Psoas muscle (tissue), 8 donors: ENCODE measurements at regions of chr19 and their contacts with region 1.

Region 1: DNA sequence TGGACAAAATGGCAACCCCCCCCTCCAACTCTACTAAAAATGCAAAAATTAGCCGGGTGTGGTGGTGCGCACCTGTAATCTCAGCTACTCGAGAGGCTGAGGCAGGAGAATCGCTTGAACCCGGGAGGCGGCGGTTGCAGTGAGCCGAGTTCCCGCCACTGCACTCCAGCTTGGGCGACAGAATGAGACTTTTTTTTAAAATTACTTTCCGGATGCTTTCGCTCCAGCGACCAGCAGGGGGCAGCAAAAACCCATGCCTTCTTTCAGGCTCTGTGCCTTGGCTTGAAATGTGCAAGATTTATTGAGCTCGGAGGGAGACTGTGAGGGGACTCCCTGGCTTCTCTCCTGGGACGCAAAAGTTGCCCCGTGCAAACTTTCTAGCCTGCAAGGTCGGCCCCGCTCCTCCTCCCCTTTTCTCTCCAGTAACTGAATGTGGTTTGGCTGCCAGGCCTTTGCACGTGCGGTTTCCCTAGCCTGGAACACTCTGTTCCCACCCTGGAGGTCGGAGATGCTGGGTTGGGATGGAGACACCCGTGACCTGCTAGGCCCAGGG is 61.4 kb upstream of the NFIC start:
- DNase-seq: peak; percentile 61 to 87
- ATAC-seq: peak; percentile 54 to 85 (median 64)
- H3K4me3 ChIP-seq: no peak overlapping the region
- H3K27ac ChIP-seq: no peak overlapping the region
- H3K4me1 ChIP-seq: no peaks in the 10 kb centered on the region
- H3K27me3 ChIP-seq: peaks cover 3 to 59% (median 6%) of the 10 kb centered on the region in 3 donors
- CTCF ChIP-seq: peak; percentile 87

Region 2: DNA sequence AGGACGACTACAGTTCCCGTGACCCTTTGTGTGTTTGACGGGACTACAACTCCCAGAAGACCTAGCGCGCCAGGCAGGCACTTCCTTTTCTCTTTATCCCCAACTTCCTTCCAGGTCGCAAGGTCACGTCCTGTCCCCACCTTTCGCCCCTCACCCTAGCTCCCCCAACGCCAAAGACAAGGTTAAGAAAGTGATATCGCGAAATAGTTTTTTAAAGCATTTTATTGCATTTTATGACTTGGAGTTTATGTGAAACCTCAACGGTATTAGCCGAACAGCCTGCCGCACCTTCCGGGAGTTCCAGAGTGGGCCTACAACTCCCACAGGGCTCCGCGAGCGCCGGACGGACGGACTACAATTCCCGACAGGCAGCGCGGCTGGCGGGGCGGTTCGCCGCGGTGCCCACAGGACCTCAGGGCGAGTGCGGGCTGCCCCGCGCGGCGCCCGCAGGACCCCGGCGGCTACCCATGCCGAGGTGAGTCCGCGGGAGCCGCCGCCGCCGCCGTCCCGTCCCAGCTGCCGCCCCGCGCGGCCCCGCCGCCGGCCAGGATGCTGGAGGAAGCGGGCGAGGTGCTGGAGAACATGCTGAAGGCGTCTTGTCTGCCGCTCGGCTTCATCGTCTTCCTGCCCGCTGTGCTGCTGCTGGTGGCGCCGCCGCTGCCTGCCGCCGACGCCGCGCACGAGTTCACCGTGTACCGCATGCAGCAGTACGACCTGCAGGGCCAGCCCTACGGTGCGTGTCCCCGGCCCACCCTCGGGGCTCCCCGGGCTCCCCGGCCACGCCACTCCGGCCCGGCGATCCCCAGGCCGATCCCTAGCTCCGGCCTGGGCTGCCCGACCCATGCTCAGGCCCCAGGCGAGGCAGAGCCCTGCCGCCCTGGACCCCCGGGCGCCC is 119.2 kb before region 1 on chr19 and contains the start of gene NCLN:
- intact Hi-C with region 1: no loop called
- DNase-seq: peak; percentile 95 to 97
- ATAC-seq: peak; percentile 97 to 98 (median 97)
- H3K4me3 ChIP-seq: peak within 1 kb of the TSS; percentile 84
- H3K27ac ChIP-seq: peak within 1 kb of the TSS; percentile 76
- H3K4me1 ChIP-seq: peaks cover 16% of the 10 kb centered on the region
- H3K27me3 ChIP-seq: no peaks in the 10 kb centered on the region
- CTCF ChIP-seq: no peak
- total RNA-seq, gene NCLN: 15.4 to 60.9 (median 28.5) TPM

Region 3: GRCh38 chr19:3277649-3278048 is 27.3 kb before region 1 on chr19:
- intact Hi-C with region 1: loop called in 1 of 2 experiments (anchors 1 kb)
- DNase-seq: no peak
- ATAC-seq: no peak
- H3K4me3 ChIP-seq: no peak overlapping the region
- H3K27ac ChIP-seq: no peak overlapping the region
- H3K4me1 ChIP-seq: no peaks in the 10 kb centered on the region
- H3K27me3 ChIP-seq: peaks cover 0 to 78% (median 31%) of the 10 kb centered on the region in 3 donors
- CTCF ChIP-seq: no peak

Region 4: GRCh38 chr19:3471954-3472655 is 167.2 kb after region 1 on chr19:
- intact Hi-C with region 1: loop called (anchors 2 to 5 kb)
- DNase-seq: peak; percentile 56 to 76
- ATAC-seq: peak; percentile 44 to 60 (median 53)
- H3K4me3 ChIP-seq: no peak overlapping the region
- H3K27ac ChIP-seq: no peak overlapping the region
- H3K4me1 ChIP-seq: no peaks in the 10 kb centered on the region
- H3K27me3 ChIP-seq: peaks cover 0 to 4% (median 2%) of the 10 kb centered on the region in 3 donors
- CTCF ChIP-seq: peak; percentile 79

Region 5: DNA sequence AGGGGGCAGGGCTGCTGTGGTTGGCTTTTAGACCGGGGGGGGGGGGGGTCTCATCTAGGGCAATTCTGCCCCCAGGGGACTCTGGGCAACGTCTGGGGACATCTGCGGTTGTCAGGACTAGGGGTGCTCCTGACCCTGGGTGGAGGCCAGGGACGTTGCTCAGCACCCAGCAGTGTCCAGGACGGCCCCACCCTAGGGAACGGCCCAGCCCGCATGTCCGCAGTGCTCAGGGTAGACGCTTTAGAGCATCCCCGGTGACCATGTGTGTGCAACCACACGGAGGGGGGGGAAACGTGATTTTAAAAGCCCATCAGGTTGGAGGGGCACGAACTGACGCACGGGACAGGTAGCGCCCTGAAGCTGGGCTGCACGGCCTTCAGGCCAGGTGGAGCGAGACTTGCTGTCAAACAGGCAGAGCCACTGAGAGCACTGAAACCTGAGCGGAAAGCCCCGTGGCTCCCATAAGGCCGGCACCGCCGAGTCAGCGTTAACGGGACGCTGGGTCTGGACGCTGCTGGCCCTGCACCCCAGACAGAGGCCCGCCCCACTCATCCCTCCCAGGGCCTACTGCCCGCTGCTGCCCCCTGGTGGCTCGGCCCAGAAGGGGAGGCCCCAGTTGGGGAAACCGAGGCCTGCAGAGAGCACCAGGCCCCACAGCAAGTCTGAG is 313.3 kb after region 1 on chr19:
- intact Hi-C with region 1: loop called in 1 of 2 experiments (anchors 10 kb)
- DNase-seq: peak; percentile 80 to 88
- ATAC-seq: peak; percentile 82 to 93 (median 87)
- H3K4me3 ChIP-seq: no peak overlapping the region
- H3K27ac ChIP-seq: no peak overlapping the region
- H3K4me1 ChIP-seq: peaks cover 7% of the 10 kb centered on the region
- H3K27me3 ChIP-seq: no peaks in the 10 kb centered on the region
- CTCF ChIP-seq: peak; percentile 88